Psoas muscle (tissue), 8 donors: ENCODE measurements at regions of chr10 and their contacts with region 1.

Region 1: DNA sequence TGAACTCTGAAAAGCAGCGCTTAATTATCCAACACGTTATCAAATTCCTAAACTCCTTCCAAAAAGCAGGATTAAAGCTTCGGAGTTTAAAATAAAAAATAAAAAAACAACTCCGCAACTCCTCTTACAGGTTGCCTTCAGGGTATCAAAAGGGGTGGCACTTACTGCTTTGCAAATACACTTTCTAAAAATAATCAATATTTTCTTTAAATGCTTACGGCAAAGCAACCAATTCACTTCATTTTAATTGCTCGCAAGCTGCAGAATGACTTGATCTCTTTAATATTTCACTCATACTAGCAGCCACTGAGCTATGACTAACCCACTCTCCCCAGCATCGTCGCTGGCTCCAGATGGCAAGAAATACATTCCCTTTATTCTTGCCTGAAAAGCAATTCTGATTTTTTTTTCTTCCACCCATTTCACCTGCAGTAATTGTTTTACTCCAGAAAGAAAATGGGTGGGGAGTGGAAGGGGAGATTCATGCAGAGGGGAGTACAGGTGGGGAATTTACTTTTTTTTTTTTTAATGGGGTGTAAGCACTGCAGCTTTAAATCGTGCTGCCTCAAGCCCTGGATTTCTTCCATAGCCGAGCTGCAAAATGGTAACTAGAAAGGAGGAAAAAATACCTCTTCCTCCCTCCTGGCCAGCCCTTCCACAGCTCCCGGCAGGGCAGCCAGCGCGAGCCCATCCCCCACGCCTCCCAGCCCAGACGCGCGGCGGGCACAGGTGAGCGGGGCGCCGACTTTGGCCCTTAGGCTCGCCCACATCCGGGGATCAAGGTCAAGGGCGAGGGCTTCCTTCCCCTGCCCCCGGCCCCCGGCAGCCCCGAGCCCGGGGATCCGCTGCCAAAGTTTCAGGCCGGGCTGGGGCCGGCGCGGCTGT is 54.2 kb upstream of the FHIP2A start:
- DNase-seq: peak; percentile 24 to 49
- ATAC-seq: no peak
- H3K4me3 ChIP-seq: peak overlapping the region; percentile 74
- H3K27ac ChIP-seq: peak overlapping the region; percentile 42
- H3K4me1 ChIP-seq: peaks cover 4% of the 10 kb centered on the region
- H3K27me3 ChIP-seq: peaks cover 0 to 46% (median 2%) of the 10 kb centered on the region in 3 donors
- CTCF ChIP-seq: no peak

Region 2: DNA sequence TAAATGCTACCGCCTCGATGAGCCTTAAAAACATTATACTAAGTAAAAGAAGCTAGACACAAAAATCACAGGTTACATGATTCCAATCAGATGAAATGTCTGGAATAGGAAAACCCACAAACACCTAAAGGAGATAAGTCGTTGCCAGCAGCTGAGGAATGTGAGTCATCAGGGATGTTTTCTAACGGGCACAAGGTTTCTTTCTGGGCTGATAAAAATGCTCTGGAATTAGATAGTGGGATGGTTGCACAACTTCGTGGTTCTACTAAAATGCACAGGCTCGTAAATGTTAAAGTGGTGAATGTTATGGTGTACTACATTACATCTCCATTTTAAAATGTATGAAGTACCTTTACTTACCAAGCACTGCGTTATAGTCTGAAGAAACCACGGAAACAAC is 119.0 kb before region 1 on chr10:
- intact Hi-C with region 1: no loop called
- DNase-seq: no peak
- ATAC-seq: no peak
- H3K4me3 ChIP-seq: no peak overlapping the region
- H3K27ac ChIP-seq: no peak overlapping the region
- H3K4me1 ChIP-seq: peaks cover 8% of the 10 kb centered on the region
- H3K27me3 ChIP-seq: no peaks in the 10 kb centered on the region
- CTCF ChIP-seq: no peak

Region 3: DNA sequence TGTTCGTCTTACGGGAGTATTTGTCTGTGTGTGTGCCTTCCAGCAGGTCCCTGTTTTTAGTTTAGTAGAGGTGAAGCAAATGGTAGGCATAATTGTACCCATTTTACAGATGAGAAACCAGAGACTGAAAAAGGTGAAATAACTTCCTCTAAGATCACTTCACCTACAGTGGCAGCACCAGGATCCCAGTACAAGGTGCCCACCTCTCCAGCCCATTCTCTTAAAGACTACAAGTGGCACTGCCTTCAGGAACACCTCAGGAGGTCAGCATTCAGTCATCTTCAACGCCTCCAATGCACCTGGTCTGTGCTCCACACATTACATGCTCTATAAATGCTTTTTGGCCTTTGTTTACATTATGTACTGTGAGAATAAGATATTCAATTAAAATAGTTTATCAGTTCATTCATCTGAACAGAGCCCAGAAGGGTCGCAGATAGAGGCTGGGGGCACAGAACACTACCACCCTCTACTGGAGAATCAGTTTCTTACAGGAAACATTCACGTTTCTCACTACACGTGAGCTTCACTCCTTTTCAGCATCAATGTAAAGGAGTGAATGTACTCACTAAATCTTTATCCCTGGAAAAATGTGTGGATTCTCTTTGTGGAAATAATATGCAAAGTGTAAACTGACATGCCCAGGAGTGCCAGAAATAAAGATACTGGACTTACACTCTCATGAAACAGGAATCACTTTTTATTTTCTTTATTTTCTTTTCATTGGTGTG is 63.8 kb before region 1 on chr10:
- intact Hi-C with region 1: no loop called
- DNase-seq: no peak
- ATAC-seq: no peak
- H3K4me3 ChIP-seq: no peak overlapping the region
- H3K27ac ChIP-seq: no peak overlapping the region
- H3K4me1 ChIP-seq: no peaks in the 10 kb centered on the region
- H3K27me3 ChIP-seq: no peaks in the 10 kb centered on the region
- CTCF ChIP-seq: peak; percentile 48

Region 4: DNA sequence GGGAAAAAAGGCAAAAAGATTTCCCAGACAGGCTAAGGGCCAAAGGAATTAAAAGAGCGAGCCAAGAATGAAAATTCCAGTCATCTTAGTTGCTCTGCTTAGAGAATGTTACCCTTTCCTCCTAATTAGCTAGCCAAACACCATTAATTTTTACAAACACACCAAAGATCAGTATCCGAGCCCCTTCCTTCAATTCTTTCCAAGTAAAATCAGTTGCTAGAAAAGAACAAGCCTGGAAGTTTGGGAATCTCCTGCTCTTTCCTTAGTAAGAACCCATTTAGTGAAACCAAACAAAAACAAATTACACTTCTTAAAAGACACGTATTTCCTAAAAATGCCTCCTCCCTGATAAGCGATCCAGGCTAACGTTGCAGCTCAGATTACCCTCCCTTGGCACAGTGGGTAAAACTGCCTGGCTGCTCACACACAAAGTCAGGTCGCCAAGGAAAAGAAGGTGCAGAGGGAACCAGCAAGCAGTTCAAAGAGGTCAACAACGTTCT is 52.1 kb before region 1 on chr10:
- intact Hi-C with region 1: loop called in 1 of 2 experiments (anchors 5 kb)
- DNase-seq: no peak
- ATAC-seq: peak in 1 of 4 donors; percentile 49
- H3K4me3 ChIP-seq: no peak overlapping the region
- H3K27ac ChIP-seq: peak overlapping the region; percentile 53
- H3K4me1 ChIP-seq: peaks cover 17% of the 10 kb centered on the region
- H3K27me3 ChIP-seq: no peaks in the 10 kb centered on the region
- CTCF ChIP-seq: no peak

Region 5: DNA sequence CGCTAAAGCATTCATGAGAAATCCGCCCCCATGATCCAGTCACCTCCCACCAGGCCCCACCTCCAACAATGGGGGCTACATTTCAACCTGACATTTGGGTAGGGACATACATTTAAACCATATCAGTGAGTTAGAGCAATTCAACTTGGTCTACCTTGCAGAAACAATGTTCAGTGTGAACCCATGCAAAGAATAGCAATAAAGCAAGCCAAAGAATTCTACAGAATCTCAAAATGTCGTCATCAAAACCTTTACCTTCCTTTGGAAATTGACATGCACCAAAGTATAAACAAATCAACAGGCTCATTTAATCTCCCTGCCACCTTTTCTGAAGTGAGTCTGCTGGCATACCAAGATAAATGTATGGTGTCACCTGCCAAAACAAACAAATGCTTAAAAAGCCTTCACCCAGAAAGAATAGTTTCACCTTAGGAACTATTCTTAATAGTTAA is 40.5 kb before region 1 on chr10:
- intact Hi-C with region 1: no loop called
- DNase-seq: no peak
- ATAC-seq: no peak
- H3K4me3 ChIP-seq: no peak overlapping the region
- H3K27ac ChIP-seq: no peak overlapping the region
- H3K4me1 ChIP-seq: no peaks in the 10 kb centered on the region
- H3K27me3 ChIP-seq: no peaks in the 10 kb centered on the region
- CTCF ChIP-seq: no peak

Region 6: GRCh38 chr10:114749014-114749413 is 18.3 kb before region 1 on chr10:
- intact Hi-C with region 1: no loop called
- DNase-seq: no peak
- ATAC-seq: peak in 2 of 4 donors; percentile 13 to 37
- H3K4me3 ChIP-seq: no peak overlapping the region
- H3K27ac ChIP-seq: peak overlapping the region; percentile 53
- H3K4me1 ChIP-seq: no peaks in the 10 kb centered on the region
- H3K27me3 ChIP-seq: no peaks in the 10 kb centered on the region
- CTCF ChIP-seq: no peak